ENCODE measurements at regions of chr3 and their contacts with region 1.

Region 1: GRCh38 chr3:4060064-4060463 is 243.1 kb upstream of the SETMAR start:
- DNase-seq: no peak

Region 2: GRCh38 chr3:4284865-4285264 is 224.8 kb after region 1 on chr3:
- intact Hi-C with region 1: loop called (anchors 5 kb)
- DNase-seq: no peak

Region 3: GRCh38 chr3:4314688-4315087 is 254.6 kb after region 1 on chr3:
- intact Hi-C with region 1: no loop called
- DNase-seq: no peak